Transverse colon (tissue), 4 donors: ENCODE measurements at regions of chrX and their contacts with region 1.

Region 1: DNA sequence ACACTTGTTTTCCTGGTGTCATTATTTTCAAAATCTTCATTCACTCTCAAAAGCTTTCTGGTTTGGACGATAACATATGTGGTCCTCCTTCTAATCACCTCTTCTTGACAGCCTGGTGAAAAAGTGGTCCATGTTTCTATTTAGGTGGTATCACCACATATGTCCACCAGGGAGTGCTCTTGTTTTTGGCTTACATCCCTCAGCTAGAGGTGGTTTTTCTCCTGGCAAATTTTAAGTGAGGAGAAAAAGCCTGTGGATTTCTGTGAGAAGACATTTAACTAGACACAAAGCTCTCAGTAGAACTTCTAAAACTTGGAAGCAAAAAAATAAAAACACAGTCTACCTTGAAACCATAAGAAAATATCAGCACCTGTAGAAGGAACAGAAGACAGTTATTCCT is 58.0 kb upstream of the FRMPD4 start:
- DNase-seq: no peak
- H3K4me3 ChIP-seq: no peak overlapping the region
- H3K27ac ChIP-seq: no peak overlapping the region
- H3K4me1 ChIP-seq: no peaks in the 10 kb centered on the region
- H3K27me3 ChIP-seq: no peaks in the 10 kb centered on the region
- CTCF ChIP-seq: peak; percentile 21 to 45 (median 25)
- EP300 ChIP-seq: no peak
- POLR2A ChIP-seq: no peak

Region 2: GRCh38 chrX:12701628-12702027 is 621.4 kb after region 1 on chrX:
- in situ Hi-C with region 1: no loop called
- intact Hi-C with region 1: loop called (anchors 10 kb)
- DNase-seq: peak; percentile 42
- H3K4me3 ChIP-seq: no peak overlapping the region
- H3K27ac ChIP-seq: no peak overlapping the region
- H3K4me1 ChIP-seq: no peaks in the 10 kb centered on the region
- H3K27me3 ChIP-seq: no peaks in the 10 kb centered on the region
- CTCF ChIP-seq: peak; percentile 32 to 42 (median 36)
- EP300 ChIP-seq: no peak
- POLR2A ChIP-seq: no peak